ENCODE measurements at regions of chr20 and their contacts with region 1.

Region 1: DNA sequence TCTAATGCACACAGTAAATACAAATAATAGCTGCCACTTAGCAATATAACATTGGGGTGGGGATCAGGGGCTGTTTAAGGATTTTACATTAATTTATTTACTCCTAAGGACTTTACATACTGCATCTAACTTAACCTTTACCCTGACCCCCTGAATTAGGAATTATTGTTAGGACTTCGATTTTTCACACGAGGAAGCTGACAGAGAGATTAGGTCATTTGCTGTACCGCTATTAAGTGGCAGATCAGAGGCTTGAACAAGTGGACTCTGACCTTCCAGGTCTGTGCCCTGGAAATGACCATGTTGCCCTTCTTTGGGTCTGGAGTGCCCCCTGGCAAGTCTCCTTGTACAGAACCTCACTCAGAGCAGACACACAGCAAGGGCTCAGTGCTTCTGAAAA is 5.2 kb upstream of the ELMO2 start:
- DNase-seq: no peak
- ATAC-seq: no peak
- H3K4me3 Mint-ChIP-seq: no peak overlapping the region
- H3K27ac Mint-ChIP-seq: no peak overlapping the region
- H3K4me1 Mint-ChIP-seq: peaks cover 35% of the 10 kb centered on the region
- H3K27me3 Mint-ChIP-seq: peaks cover 21% of the 10 kb centered on the region

Region 2: DNA sequence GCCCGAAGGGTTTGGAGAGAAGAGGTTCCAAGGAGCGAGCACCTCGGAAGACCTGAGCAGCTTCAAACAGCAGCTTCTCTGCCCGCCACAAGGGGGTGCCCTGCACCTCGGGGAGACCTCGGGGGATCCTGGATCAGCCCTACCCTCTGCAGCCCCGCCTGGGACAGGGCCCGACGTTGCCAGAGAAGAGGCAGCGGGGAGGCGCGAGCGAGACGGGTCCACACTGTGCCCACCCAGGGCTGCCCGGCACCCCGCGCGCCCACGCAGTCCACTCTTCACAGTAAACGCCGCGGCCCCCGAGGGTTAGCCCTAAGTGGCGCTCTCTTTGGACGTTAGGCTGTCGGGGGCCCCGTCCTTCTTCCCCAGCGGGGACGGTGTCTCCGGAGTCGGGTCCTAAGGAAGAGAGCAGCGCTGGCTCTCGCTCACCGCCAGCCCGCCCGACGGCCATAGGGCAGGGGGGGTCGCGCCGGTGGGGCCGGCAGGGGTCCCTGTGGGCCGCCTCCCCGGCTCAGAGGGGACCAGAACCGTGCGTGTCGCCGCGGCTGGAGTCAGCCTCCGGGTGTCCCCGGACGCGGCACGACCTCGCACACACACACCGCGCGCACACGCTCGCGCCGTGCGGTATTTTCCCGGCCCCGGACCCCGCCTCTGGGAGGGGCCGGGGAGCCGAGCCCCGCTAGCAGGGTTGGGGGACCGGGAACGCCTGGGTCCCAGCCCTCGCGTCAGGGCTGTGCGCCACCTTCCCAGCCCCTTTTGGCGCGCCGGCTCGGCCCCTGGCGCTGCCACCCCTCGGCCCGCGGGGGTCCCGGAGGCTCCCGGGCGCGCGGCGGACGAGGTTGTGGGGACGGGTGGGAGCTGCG is 104.3 kb before region 1 on chr20:
- CTCF ChIA-PET with region 1: interaction called, 36 read pairs
- POLR2A ChIA-PET with region 1: no interaction called
- DNase-seq: peak; percentile 75
- ATAC-seq: peak; percentile 83
- H3K4me3 Mint-ChIP-seq: no peak overlapping the region
- H3K27ac Mint-ChIP-seq: no peak overlapping the region
- H3K4me1 Mint-ChIP-seq: peaks cover 4% of the 10 kb centered on the region
- H3K27me3 Mint-ChIP-seq: peaks cover 63% of the 10 kb centered on the region

Region 3: GRCh38 chr20:46375771-46376170 is 35.9 kb before region 1 on chr20:
- CTCF ChIA-PET with region 1: no interaction called
- POLR2A ChIA-PET with region 1: no interaction called
- DNase-seq: no peak
- ATAC-seq: no peak
- H3K4me3 Mint-ChIP-seq: no peak overlapping the region
- H3K27ac Mint-ChIP-seq: no peak overlapping the region
- H3K4me1 Mint-ChIP-seq: no peaks in the 10 kb centered on the region
- H3K27me3 Mint-ChIP-seq: no peaks in the 10 kb centered on the region

Measured in activated CD8-positive, alpha-beta T cell treated with anti-CD3 and anti-CD28 coated beads, Interleukin-2, amount 10 ng/mL, durations not matched to agents 7 days and 5 days (primary cell).